K562 (cell line): ENCODE measurements at regions of chr4 and their contacts with region 1.

Region 1: DNA sequence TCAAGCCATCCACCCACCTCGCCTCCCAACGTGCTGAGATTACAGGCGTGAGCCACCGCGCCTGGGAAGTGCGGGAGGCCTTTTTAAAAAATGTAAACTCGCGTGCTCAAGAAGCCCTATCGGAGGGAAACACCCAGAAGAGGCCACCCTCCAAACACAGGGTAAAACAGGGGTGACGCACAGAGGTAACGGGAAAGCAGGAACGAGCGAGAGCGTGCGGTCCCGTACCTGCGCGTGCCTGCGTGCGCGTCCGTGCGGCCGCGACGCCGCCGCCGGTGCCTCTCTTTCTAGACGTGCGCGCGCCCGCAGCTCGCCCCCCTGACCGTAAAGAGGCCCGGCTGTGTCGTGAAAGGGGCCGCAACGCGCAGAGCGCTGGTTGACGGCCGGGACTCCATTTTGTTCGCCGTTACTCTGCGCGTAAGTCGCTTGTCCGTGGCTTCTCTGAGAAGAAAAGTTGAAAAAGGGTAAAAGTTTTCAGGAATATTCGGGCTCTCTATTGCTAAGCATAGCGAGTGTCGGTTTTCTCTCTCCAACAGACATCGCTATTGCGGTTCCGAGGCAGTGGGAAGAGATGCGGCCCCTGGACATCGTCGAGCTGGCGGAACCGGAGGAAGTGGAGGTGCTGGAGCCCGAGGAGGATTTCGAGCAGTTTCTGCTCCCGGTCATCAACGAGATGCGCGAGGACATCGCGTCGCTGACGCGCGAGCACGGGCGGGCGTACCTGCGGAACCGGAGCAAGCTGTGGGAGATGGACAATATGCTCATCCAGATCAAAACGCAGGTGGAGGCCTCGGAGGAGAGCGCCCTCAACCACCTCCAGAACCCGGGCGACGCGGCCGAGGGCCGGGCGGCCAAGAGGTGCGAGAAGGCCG is at the start of gene MRFAP1:
- DNase-seq: peak; percentile 95 to 97 (median 96)
- ATAC-seq: peak; percentile 82
- H3K4me3 ChIP-seq: peak within 1 kb of the TSS; percentile 85
- H3K27ac ChIP-seq: peak within 1 kb of the TSS; percentile 97
- H3K4me1 ChIP-seq: peaks cover 16 to 24% of the 10 kb centered on the region in 2 experiments; a peak in 4 of 5 replicates
- H3K27me3 ChIP-seq: no peaks in the 10 kb centered on the region
- CTCF ChIP-seq: no peak
- EP300 ChIP-seq: no peak; the same call in 1 of the 2 replicates
- POLR2A ChIP-seq: peak; percentile 94
- RAD21 ChIP-seq: no peak; a peak in 1 of 4 replicates
- polyA plus RNA-seq, gene MRFAP1: 46.0 to 59.9 TPM

Region 2: DNA sequence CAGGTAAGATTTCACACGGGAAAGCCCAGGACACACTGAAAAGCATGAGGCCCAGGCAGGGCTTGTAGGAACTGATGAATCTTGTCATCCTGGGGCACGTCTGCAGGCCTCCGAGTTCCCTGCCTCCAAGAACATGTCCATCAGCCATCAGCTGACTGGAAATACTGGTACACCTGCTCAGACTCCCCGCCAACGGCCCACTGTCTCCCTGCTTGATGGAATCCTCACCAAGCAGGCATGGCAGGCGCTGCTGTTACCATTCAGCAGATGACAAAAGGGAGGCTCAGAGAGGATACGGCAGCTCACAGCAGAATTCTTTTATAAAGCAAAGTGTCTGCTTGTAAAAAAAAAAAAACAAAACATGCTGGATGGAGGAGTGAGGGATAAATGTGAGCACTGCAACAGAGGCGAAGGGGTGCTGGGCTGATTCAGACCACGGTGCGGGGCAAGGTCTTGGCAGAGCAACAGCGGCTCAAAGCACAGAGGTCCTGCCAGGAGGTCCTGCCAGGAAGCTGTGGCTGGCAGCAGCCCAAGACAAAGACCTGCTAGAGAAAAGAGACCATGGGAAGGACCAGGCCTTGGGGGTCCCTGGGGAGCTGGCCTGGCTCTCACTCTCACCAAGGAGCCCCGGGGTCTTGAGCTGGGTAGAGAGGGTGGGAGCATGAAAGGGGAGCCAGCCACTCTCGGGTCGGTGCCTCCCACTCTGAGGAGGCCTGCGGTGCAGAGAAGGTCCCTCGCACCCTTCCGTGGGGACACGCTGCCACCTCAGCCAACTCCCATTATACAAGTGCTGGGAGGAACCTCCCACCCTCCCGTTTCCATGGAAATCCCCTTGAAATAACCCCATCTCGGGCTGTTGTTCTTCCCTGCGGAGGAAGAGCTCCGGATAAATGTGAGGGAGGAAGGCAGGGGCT is 193.7 kb before region 1 on chr4:
- CTCF ChIA-PET with region 1: no interaction called
- POLR2A ChIA-PET with region 1: no interaction called
- in situ Hi-C with region 1: no loop called
- intact Hi-C with region 1: no loop called
- DNase-seq: no peak
- ATAC-seq: no peak
- H3K4me3 ChIP-seq: no peak overlapping the region
- H3K27ac ChIP-seq: no peak overlapping the region
- H3K4me1 ChIP-seq: no peaks in the 10 kb centered on the region
- H3K27me3 ChIP-seq: peaks cover 26 to 78% of the 10 kb centered on the region in 2 experiments; a peak in 4 of 5 replicates
- CTCF ChIP-seq: no peak
- EP300 ChIP-seq: no peak
- POLR2A ChIP-seq: no peak
- RAD21 ChIP-seq: no peak

Region 3: DNA sequence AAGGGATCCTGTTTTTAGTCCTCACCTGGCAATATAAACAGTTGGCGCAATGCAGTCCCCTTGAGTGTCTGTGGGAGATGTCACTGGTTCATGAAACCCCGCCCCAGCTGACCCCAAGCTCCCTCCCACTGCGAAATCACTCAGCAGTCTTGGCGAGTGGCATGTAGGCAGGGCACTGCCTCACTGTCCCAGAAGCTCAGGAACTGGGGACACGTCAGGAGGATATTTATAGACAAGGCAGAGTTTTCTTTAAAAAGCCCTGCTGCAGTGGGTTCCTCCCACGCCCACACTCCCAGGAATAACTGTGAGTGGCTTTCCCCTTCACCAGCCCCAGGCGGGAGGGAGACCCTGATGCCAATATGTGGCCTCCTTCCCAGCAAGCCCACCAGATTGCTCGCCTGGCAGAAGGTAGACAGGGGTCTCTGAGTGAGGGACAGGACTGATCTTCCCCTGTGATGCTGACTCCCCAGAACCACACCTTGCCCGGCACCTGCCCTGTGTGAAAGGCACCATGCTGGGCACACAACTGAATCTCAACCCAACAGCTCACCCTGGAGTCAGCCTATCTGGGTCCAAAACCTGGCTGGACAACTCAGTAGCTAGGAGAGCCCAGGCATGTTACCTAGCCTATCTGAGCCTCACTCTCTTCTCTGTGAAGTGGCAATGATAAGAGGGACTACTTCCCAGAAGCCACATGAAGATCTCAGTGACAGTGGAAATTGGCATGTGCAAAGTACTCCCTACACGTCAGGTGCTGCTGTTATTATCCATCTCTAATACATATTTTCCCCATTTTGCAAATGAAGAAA is 123.6 kb before region 1 on chr4:
- CTCF ChIA-PET with region 1: no interaction called
- POLR2A ChIA-PET with region 1: no interaction called
- in situ Hi-C with region 1: no loop called
- intact Hi-C with region 1: no loop called
- DNase-seq: no peak
- ATAC-seq: no peak
- H3K4me3 ChIP-seq: no peak overlapping the region
- H3K27ac ChIP-seq: no peak overlapping the region
- H3K4me1 ChIP-seq: no peaks in the 10 kb centered on the region
- H3K27me3 ChIP-seq: peaks cover 0 to 24% of the 10 kb centered on the region in 2 experiments; a peak in 4 of 5 replicates
- CTCF ChIP-seq: no peak
- EP300 ChIP-seq: no peak
- POLR2A ChIP-seq: no peak
- RAD21 ChIP-seq: no peak

Region 4: GRCh38 chr4:6658209-6658595 is 17.7 kb after region 1 on chr4:
- CTCF ChIA-PET with region 1: no interaction called
- POLR2A ChIA-PET with region 1: interaction called, 18 read pairs
- in situ Hi-C with region 1: no loop called
- intact Hi-C with region 1: no loop called
- DNase-seq: no peak
- ATAC-seq: no peak
- H3K4me3 ChIP-seq: no peak overlapping the region
- H3K27ac ChIP-seq: no peak overlapping the region
- H3K4me1 ChIP-seq: peaks cover 0 to 17% of the 10 kb centered on the region in 2 experiments; a peak in 3 of 5 replicates
- H3K27me3 ChIP-seq: 0 out of 5 replicates have a peak, but pooled peaks cover 3 to 4% of the 10 kb centered on the region in 2 experiments
- CTCF ChIP-seq: no peak
- EP300 ChIP-seq: no peak
- POLR2A ChIP-seq: no peak
- RAD21 ChIP-seq: no peak

Region 5: DNA sequence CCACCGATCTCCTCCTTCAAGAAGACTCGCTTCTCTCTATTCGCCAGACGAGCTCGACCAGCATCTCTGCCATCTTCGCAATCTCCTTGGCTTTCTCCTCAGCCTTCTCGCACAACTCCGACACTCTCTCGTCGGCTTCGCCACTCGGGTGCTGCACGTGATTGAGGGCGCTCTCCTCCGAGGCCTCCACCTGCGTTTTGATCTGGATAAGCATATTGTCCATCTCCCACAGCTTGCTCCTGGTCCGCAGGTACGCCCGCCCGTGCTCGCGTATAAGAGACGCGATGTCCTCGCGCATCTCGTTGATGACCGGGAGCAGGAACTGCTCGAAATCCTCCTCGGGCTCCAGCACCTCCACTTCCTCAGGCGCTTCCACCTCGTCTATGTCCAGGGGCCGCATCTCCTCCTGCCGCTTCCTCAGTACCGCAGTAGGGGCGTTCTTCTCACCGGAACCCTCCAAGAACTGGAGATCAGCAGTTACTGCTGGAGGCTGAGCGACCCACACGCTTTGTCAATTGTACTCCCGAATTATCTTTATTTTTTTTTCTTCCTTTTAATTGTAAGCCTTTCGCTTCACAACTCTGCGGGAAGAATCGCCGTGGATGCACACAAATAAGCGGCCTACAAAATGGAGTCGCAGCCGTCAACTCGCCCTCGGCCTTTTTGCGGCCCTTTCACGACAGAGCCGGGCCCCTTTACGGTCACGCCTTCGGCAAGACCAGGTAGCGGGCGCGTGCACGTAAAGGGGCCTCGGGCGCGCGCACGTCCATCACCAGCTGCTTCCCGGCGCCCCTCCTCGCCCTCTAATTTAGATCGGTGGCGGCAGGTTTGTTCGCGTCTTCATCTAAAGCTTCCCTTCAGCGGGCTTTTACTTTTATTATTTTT is 68.9 kb after region 1 on chr4 and contains the start of gene MRFAP1L1:
- CTCF ChIA-PET with region 1: no interaction called
- POLR2A ChIA-PET with region 1: interaction called, 4 read pairs
- in situ Hi-C with region 1: no loop called
- intact Hi-C with region 1: loop called (anchors 5 kb)
- DNase-seq: peak; percentile 94 to 98 (median 95)
- ATAC-seq: peak; percentile 86
- H3K4me3 ChIP-seq: peak within 1 kb of the TSS; percentile 73
- H3K27ac ChIP-seq: peak within 1 kb of the TSS; percentile 75
- H3K4me1 ChIP-seq: peaks cover 3 to 22% of the 10 kb centered on the region in 2 experiments; a peak in 4 of 5 replicates
- H3K27me3 ChIP-seq: no peaks in the 10 kb centered on the region
- CTCF ChIP-seq: no peak
- EP300 ChIP-seq: no peak; the same call in 1 of the 2 replicates
- POLR2A ChIP-seq: peak; percentile 87
- RAD21 ChIP-seq: no peak
- polyA plus RNA-seq, gene MRFAP1L1: 37.6 to 48.1 TPM